Activated naive CD4-positive, alpha-beta T cell treated with anti-CD3 and anti-CD28 coated beads, Interleukin-2, amount 10 ng/mL, durations not matched to agents 7 days and 5 days (primary cell): ENCODE measurements at regions of chr1 and their contacts with region 1.

Region 1: GRCh38 chr1:205523891-205524793 is 19.7 kb downstream of the CDK18 start:
- DNase-seq: peak; percentile 83
- H3K4me3 Mint-ChIP-seq: no peak overlapping the region
- H3K27ac Mint-ChIP-seq: no peak overlapping the region
- H3K4me1 Mint-ChIP-seq: no peaks in the 10 kb centered on the region
- H3K27me3 Mint-ChIP-seq: peaks cover 4% of the 10 kb centered on the region

Region 2: DNA sequence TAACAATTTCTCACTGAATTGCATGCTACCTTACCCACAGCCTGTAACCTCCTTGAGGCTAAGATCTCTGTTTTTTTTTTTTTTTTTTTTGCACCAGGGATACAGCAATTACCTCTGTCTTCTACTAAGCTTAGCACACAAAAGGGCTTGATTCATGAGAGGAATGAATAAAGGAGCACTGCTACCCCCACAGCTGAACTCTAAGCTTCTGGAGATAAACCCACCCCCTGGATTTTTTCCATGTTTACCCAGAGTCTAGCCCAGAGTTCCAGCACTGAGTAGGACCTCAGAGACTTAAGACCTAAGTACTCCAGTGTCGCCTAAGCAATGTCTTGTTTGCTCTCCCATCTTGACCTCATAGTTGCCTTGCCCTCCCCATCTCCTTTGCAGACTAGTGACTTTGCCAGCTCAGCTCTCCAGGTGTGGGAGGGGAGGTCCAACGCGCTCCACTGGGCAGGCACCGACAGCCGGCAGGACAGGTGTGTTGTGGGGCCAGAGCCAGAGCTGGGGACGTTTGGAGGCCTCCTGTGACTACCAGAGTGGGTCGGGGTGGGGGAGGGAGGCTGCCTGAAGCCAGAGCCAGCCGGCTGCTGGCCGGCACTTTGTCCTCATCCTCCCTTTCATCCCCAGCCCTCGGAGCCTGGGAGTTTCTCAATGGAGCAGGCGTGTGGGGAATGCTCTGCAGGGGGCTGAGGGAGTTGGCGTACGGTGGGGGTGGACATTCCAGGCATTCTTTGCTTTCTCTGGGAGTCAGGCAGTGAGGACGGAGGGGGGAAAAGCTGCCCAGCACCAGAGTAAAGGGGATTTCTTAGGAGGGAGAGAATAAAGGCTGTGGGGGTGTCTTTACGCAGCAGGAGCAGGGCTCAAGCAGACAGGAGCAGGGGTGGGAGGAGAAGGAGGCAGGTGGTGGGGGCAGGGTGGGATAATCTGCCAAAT is 223.0 kb before region 1 on chr1:
- CTCF ChIA-PET with region 1: no interaction called
- DNase-seq: no peak
- H3K4me3 Mint-ChIP-seq: no peak overlapping the region
- H3K27ac Mint-ChIP-seq: no peak overlapping the region
- H3K4me1 Mint-ChIP-seq: peaks cover 32% of the 10 kb centered on the region
- H3K27me3 Mint-ChIP-seq: peaks cover 14% of the 10 kb centered on the region

Region 3: DNA sequence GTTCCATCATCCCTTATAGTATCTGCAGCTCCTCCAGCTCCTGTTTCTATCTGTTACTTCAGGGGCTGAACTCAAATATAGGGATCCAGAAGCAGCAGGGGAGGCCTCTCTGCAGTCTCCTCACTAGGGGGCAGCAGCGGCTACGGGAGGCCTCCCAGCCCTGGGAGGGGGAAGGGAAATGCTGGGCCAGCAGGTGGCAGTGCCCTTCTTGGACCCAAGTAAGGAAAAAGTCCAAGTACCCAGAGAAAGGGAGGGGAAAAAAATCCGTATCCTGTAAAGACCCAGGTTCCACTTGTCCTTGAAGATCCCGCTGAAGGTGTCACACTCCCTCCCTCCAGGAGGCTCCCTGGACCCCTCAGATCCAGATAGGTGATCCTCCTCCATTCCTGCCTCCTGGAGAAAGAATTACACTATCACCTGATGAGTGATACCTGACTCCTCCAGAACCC is 188.5 kb before region 1 on chr1:
- CTCF ChIA-PET with region 1: interaction called, 62 read pairs
- DNase-seq: peak; percentile 88
- H3K4me3 Mint-ChIP-seq: no peak overlapping the region
- H3K27ac Mint-ChIP-seq: no peak overlapping the region
- H3K4me1 Mint-ChIP-seq: no peaks in the 10 kb centered on the region
- H3K27me3 Mint-ChIP-seq: peaks cover 92% of the 10 kb centered on the region

Region 4: DNA sequence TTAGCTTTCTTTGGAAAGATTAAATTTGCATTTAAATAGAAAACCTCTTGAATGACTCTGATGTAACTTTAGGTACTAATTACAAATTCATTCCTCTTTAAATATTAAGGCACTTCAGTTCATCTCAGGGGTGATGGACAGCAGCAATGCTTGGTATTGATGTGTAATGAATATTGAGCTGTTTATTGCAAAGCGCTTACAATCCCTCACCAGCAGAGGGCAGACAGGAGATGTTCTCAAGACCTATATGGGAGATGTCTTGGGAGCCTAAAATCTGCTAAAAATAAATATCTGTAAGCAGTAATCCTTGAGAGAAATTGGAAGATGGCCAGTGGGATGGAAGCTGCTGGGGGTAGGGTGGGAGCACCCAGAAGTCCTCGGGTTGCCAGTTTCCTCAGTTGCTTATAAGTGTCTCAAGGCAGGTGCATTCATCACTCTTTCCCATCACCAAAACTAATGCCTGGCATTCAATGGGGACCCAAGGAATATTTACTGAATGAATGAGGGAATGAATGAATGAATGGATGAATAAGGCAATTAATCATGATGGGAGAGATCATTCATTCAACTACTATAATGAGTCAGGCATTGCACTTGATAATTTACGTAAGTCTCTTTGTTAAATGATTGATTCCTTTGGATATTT is 169.8 kb before region 1 on chr1:
- CTCF ChIA-PET with region 1: interaction called, 48 read pairs
- DNase-seq: peak; percentile 77
- H3K4me3 Mint-ChIP-seq: no peak overlapping the region
- H3K27ac Mint-ChIP-seq: no peak overlapping the region
- H3K4me1 Mint-ChIP-seq: no peaks in the 10 kb centered on the region
- H3K27me3 Mint-ChIP-seq: peaks cover 54% of the 10 kb centered on the region

Region 5: GRCh38 chr1:205500240-205501233 is 23.6 kb before region 1 on chr1:
- CTCF ChIA-PET with region 1: interaction called, 20 read pairs
- DNase-seq: no peak
- H3K4me3 Mint-ChIP-seq: no peak overlapping the region
- H3K27ac Mint-ChIP-seq: no peak overlapping the region
- H3K4me1 Mint-ChIP-seq: peaks cover 12% of the 10 kb centered on the region
- H3K27me3 Mint-ChIP-seq: peaks cover 39% of the 10 kb centered on the region

Region 6: DNA sequence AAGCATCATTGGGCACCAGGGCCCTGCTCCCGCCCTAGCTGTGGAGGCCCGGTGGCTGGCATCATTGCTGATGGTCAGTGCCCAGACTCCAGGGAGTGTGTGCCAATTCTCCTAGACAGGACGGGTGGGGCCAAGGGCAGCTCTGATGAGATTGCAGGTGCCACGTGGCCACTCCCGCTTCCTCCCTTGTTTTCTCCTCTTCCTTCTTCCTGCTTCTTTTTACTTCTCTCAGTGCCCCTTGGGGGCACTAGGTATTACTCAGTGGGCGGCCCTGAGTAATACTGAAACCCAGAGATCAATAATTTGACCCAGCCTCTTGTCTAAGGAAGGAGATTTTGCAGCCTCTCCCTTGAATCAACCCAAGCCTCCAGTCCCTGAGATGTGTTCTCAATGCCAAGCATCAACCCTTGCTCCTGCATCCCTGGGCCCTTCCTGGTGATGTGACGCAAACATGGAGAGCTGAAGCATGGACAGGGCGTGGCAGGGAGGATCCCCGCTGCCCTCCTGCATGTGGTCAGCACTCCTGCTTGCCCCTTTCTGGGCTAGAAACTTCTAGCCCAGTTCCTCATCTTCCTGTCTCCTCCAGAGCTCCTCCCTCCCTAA is 12.7 kb after region 1 on chr1:
- CTCF ChIA-PET with region 1: interaction called, 12 read pairs
- DNase-seq: peak; percentile 18
- H3K4me3 Mint-ChIP-seq: no peak overlapping the region
- H3K27ac Mint-ChIP-seq: no peak overlapping the region
- H3K4me1 Mint-ChIP-seq: peaks cover 11% of the 10 kb centered on the region
- H3K27me3 Mint-ChIP-seq: peaks cover 44% of the 10 kb centered on the region

Region 7: DNA sequence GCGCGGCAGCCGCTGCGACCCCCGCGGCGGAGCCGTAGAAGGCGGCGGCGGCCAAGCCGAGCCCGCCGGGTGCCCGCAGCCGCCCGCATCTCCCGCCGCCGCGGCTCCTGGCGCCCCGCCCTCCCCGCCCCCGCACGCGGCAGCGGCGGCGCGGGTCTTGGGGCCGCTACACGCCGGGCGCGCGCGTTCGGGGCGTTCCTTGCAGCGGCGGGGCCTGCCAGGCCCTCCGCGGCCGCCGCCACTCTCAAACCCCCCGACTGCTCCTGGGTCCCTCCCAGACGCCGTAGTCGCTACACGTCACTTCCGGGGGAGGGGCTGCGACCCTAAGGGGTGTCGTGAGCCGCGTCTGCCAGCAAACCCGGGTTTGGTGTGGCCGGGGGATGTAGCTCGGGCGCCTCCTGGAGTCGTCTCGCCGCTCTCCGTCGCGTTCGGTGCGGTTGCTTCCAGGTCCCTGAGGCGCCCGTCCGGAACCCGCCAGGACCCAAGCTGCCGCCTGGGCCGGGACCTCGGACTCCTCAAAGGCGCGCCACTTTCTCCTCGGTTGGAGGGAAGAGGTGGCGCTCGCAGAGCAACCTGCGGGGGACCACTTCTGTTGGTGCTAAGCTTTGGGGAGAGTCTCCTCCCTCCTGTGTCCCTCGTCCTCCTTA is 107.7 kb after region 1 on chr1 and contains the start of gene ELK4:
- CTCF ChIA-PET with region 1: interaction called, 20 read pairs
- DNase-seq: peak; percentile 100
- H3K4me3 Mint-ChIP-seq: peak within 1 kb of the TSS; percentile 87
- H3K27ac Mint-ChIP-seq: peak within 1 kb of the TSS; percentile 97
- H3K4me1 Mint-ChIP-seq: peaks cover 52% of the 10 kb centered on the region
- H3K27me3 Mint-ChIP-seq: peaks cover 4% of the 10 kb centered on the region